CD4-positive, alpha-beta memory T cell (primary cell): ENCODE measurements at regions of chr6 and their contacts with region 1.

Region 1: DNA sequence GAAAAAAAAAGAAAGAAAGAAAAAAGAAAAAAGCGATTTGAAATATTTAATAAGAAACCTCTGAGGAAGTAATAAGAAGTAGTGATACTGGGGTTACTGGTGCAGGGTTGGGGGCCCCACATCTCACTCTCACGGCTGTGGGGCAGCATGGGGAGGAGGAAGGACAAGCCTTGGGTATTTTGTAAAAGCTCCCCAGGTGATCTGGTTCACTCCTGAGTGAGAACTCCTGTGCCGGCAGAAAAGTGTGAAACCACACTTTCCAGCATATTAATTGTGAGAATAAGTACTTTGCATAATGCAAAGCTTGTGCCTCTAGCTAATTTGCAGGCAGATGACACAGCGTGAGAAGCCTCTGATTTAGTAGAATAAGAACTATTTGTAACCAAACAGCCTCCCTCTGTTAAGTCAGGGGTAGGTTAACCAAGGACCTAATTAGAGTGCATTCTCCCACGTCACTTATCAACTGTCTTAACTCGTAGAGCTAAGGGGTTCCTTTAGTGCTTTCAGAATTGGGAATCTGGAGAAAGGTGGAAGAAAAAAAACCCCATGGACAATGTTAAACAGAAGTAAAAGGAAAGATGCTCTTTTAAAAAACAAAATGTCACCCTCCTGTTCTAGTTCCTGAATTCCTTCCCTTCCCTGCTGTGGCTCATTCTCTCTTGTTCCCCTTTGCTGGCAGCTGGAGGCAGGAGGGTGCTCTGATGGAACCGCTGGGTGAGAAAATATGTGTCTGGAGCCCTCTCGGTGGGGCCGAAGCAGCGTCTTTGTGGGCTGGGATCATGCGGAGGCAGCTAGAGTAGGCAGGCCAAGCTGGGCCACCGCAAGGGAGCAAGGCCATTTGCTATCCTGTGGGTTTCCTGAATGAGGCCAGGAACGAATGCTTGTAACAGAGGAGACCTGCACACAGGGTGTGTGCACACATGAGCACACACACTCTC is 108.7 kb downstream of the FYN start:
- DNase-seq: peak; percentile 73 to 87 (median 74)
- H3K4me3 ChIP-seq: peak overlapping the region; percentile 12 to 39
- H3K4me3 Mint-ChIP-seq: peak overlapping the region; percentile 74 to 97 (median 82)
- H3K27ac ChIP-seq: peak overlapping the region; percentile 99
- H3K27ac Mint-ChIP-seq: peak overlapping the region; percentile 97 to 100 (median 99)
- H3K4me1 ChIP-seq: peaks cover 96% of the 10 kb centered on the region
- H3K4me1 Mint-ChIP-seq: peaks cover 88 to 100% (median 94%) of the 10 kb centered on the region in 4 donors
- H3K27me3 ChIP-seq: no peaks in the 10 kb centered on the region
- H3K27me3 Mint-ChIP-seq: no peaks in the 10 kb centered on the region

Region 2: GRCh38 chr6:110682460-110682853 is 1082.0 kb before region 1 on chr6:
- CTCF ChIA-PET with region 1: no interaction called
- POLR2A ChIA-PET with region 1: no interaction called
- intact Hi-C with region 1: no loop called
- DNase-seq: peak; percentile 76 to 81 (median 78)
- H3K4me3 ChIP-seq: no peak overlapping the region
- H3K4me3 Mint-ChIP-seq: peak overlapping the region in 1 of 8 donors; percentile 0
- H3K27ac ChIP-seq: no peak overlapping the region
- H3K27ac Mint-ChIP-seq: peak overlapping the region in 4 of 7 donors; percentile 60 to 76 (median 69)
- H3K4me1 ChIP-seq: peaks cover 13% of the 10 kb centered on the region
- H3K4me1 Mint-ChIP-seq: peaks cover 11 to 24% (median 16%) of the 10 kb centered on the region in 4 donors
- H3K27me3 ChIP-seq: no peaks in the 10 kb centered on the region
- H3K27me3 Mint-ChIP-seq: no peaks in the 10 kb centered on the region

Region 3: GRCh38 chr6:111683749-111684267 is 80.7 kb before region 1 on chr6:
- CTCF ChIA-PET with region 1: no interaction called
- POLR2A ChIA-PET with region 1: no interaction called
- intact Hi-C with region 1: no loop called
- DNase-seq: peak in 4 of 5 donors; percentile 21 to 30 (median 25)
- H3K4me3 ChIP-seq: no peak overlapping the region
- H3K4me3 Mint-ChIP-seq: peak overlapping the region; percentile 13 to 79 (median 70)
- H3K27ac ChIP-seq: peak overlapping the region; percentile 45
- H3K27ac Mint-ChIP-seq: peak overlapping the region; percentile 72 to 94 (median 92)
- H3K4me1 ChIP-seq: peaks cover 80% of the 10 kb centered on the region
- H3K4me1 Mint-ChIP-seq: peaks cover 69 to 92% (median 81%) of the 10 kb centered on the region in 4 donors
- H3K27me3 ChIP-seq: no peaks in the 10 kb centered on the region
- H3K27me3 Mint-ChIP-seq: no peaks in the 10 kb centered on the region

Region 4: GRCh38 chr6:111696814-111697213 is 67.7 kb before region 1 on chr6:
- CTCF ChIA-PET with region 1: no interaction called
- POLR2A ChIA-PET with region 1: no interaction called
- intact Hi-C with region 1: no loop called
- DNase-seq: no peak
- H3K4me3 ChIP-seq: no peak overlapping the region
- H3K4me3 Mint-ChIP-seq: no peak overlapping the region
- H3K27ac ChIP-seq: no peak overlapping the region
- H3K27ac Mint-ChIP-seq: peak overlapping the region in 3 of 7 donors; percentile 48 to 64 (median 63)
- H3K4me1 ChIP-seq: peaks cover 54% of the 10 kb centered on the region
- H3K4me1 Mint-ChIP-seq: peaks cover 46 to 76% (median 63%) of the 10 kb centered on the region in 4 donors
- H3K27me3 ChIP-seq: no peaks in the 10 kb centered on the region
- H3K27me3 Mint-ChIP-seq: no peaks in the 10 kb centered on the region

Region 5: GRCh38 chr6:111709615-111710398 is 54.7 kb before region 1 on chr6:
- CTCF ChIA-PET with region 1: interaction called, 9 read pairs
- POLR2A ChIA-PET with region 1: interaction called, 22 read pairs
- intact Hi-C with region 1: loop called (anchors 2 kb)
- DNase-seq: peak; percentile 74 to 79 (median 76)
- H3K4me3 ChIP-seq: no peak overlapping the region
- H3K4me3 Mint-ChIP-seq: peak overlapping the region; percentile 26 to 82 (median 44)
- H3K27ac ChIP-seq: peak overlapping the region; percentile 42
- H3K27ac Mint-ChIP-seq: peak overlapping the region; percentile 91 to 97 (median 95)
- H3K4me1 ChIP-seq: peaks cover 51% of the 10 kb centered on the region
- H3K4me1 Mint-ChIP-seq: peaks cover 40 to 60% (median 48%) of the 10 kb centered on the region in 4 donors
- H3K27me3 ChIP-seq: no peaks in the 10 kb centered on the region
- H3K27me3 Mint-ChIP-seq: no peaks in the 10 kb centered on the region

Region 6: DNA sequence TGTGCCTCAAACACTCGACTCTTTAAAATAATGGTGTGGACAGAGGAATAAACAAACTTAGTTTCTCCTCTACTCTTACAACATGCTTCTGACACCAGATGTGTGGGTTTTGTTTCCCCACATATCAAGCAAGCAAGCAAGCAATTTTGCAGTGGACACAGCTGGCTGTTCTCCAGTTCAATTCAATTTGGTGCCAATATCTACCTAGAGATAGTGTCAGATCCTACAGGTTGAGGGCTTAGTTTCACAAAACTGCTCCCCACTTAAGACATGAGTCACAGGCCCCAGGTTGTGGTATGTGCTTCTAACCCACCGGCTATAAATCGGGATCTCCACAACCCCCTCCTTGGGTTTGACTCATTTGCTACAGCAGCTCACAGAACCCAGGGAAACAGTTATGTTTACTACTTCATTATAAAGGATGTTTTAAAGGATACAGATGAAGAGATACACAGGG is 27.4 kb before region 1 on chr6:
- CTCF ChIA-PET with region 1: no interaction called
- POLR2A ChIA-PET with region 1: interaction called, 201 read pairs
- intact Hi-C with region 1: no loop called
- DNase-seq: peak in 1 of 5 donors; percentile 78
- H3K4me3 ChIP-seq: no peak overlapping the region
- H3K4me3 Mint-ChIP-seq: peak overlapping the region in 7 of 8 donors; percentile 32 to 81 (median 69)
- H3K27ac ChIP-seq: peak overlapping the region; percentile 32
- H3K27ac Mint-ChIP-seq: peak overlapping the region; percentile 87 to 97 (median 93)
- H3K4me1 ChIP-seq: peaks cover 100% of the 10 kb centered on the region
- H3K4me1 Mint-ChIP-seq: peaks cover 74 to 100% (median 86%) of the 10 kb centered on the region in 4 donors
- H3K27me3 ChIP-seq: no peaks in the 10 kb centered on the region
- H3K27me3 Mint-ChIP-seq: no peaks in the 10 kb centered on the region

Region 7: DNA sequence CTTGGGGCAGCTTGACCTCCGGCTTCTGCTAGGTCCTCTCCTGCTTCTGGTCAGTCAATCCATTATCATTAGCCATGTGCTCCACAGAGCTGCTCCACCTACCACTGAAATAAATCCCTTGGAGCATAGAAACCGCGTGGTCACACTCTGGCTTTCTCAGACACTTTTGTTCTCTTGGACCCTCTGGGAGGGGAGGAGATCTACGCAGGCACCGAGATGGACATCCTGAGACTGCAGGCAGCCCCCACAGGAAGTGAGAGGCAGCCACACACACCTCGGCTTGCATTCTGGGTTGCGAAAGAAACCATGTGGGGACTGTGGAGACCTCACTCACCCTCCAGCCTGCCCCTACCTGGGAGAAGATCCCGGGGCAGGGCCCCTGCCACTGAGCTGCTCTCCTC is 29.2 kb after region 1 on chr6:
- CTCF ChIA-PET with region 1: interaction called, 9 read pairs
- POLR2A ChIA-PET with region 1: interaction called, 27 read pairs
- intact Hi-C with region 1: loop called (anchors 5 kb)
- DNase-seq: peak; percentile 45 to 70 (median 49)
- H3K4me3 ChIP-seq: peak overlapping the region; percentile 42 to 52
- H3K4me3 Mint-ChIP-seq: peak overlapping the region; percentile 63 to 84 (median 81)
- H3K27ac ChIP-seq: peak overlapping the region; percentile 45
- H3K27ac Mint-ChIP-seq: peak overlapping the region in 6 of 7 donors; percentile 88 to 95 (median 92)
- H3K4me1 ChIP-seq: peaks cover 94% of the 10 kb centered on the region
- H3K4me1 Mint-ChIP-seq: peaks cover 6 to 63% (median 31%) of the 10 kb centered on the region in 4 donors
- H3K27me3 ChIP-seq: no peaks in the 10 kb centered on the region
- H3K27me3 Mint-ChIP-seq: no peaks in the 10 kb centered on the region

Region 8: DNA sequence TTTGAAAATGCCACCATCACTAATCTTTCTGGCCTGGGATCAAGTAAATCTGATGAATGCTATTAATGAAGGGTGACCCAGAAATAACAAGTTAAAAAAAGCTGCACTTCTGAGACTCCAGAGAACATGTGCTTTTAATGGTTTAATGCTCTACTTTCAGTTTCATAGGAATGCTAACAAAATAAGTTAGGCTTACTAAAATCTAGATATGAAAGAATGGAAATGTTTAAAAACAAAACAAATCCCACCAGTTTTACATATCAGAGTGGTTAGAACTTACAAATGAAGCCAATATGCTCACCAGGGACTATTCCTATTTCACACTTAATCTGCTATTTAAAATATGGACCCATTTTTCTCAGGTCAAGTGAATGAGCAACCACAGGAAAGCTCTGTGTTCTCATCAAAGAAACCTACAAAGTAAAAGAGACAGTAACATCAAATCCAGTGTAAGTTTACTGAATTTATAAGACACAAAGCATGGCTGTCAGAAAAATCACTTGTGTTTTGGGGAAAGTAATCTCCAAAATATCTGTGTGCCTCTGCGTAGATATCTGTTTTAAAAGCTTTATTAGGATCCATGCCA is 68.4 kb after region 1 on chr6:
- CTCF ChIA-PET with region 1: interaction called, 4 read pairs
- POLR2A ChIA-PET with region 1: interaction called, 12 read pairs
- intact Hi-C with region 1: no loop called
- DNase-seq: no peak
- H3K4me3 ChIP-seq: no peak overlapping the region
- H3K4me3 Mint-ChIP-seq: peak overlapping the region; percentile 29 to 82 (median 69)
- H3K27ac ChIP-seq: peak overlapping the region; percentile 16
- H3K27ac Mint-ChIP-seq: peak overlapping the region in 5 of 7 donors; percentile 69 to 96 (median 88)
- H3K4me1 ChIP-seq: peaks cover 86% of the 10 kb centered on the region
- H3K4me1 Mint-ChIP-seq: peaks cover 41 to 84% (median 70%) of the 10 kb centered on the region in 4 donors
- H3K27me3 ChIP-seq: no peaks in the 10 kb centered on the region
- H3K27me3 Mint-ChIP-seq: no peaks in the 10 kb centered on the region

Region 9: DNA sequence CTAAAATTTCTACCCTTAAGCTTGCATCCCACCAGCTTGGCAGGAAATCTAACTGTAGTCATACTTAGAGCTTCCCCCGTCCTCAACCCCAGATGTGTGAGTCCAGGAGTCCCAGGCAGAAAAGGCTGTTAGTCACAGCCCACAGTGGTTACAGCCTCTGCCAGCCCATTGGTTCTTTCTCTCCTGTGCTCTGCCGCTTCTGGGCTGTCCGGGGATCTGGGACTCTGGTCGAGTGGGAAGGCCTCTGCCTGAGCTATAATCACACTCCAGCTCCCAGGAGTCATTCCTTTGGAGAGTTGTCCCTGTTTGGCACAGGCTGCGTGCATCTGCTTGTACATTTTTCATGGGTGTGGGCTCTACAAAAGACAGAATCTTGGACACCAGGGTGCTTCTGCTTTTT is 154.3 kb after region 1 on chr6:
- CTCF ChIA-PET with region 1: no interaction called
- POLR2A ChIA-PET with region 1: no interaction called
- intact Hi-C with region 1: no loop called
- DNase-seq: no peak
- H3K4me3 ChIP-seq: no peak overlapping the region
- H3K4me3 Mint-ChIP-seq: no peak overlapping the region
- H3K27ac ChIP-seq: no peak overlapping the region
- H3K27ac Mint-ChIP-seq: no peak overlapping the region
- H3K4me1 ChIP-seq: no peaks in the 10 kb centered on the region
- H3K4me1 Mint-ChIP-seq: no peaks in the 10 kb centered on the region
- H3K27me3 ChIP-seq: no peaks in the 10 kb centered on the region
- H3K27me3 Mint-ChIP-seq: no peaks in the 10 kb centered on the region

Region 10: GRCh38 chr6:111973118-111973761 is 208.7 kb after region 1 on chr6:
- CTCF ChIA-PET with region 1: interaction called, 3 read pairs
- POLR2A ChIA-PET with region 1: interaction called, 11 read pairs
- intact Hi-C with region 1: no loop called
- DNase-seq: peak; percentile 63 to 91 (median 78)
- H3K4me3 ChIP-seq: peak overlapping the region in 1 of 2 donors; percentile 6
- H3K4me3 Mint-ChIP-seq: peak overlapping the region; percentile 61 to 79 (median 66)
- H3K27ac ChIP-seq: peak overlapping the region; percentile 75
- H3K27ac Mint-ChIP-seq: peak overlapping the region; percentile 89 to 99 (median 95)
- H3K4me1 ChIP-seq: peaks cover 29% of the 10 kb centered on the region
- H3K4me1 Mint-ChIP-seq: peaks cover 30 to 60% (median 48%) of the 10 kb centered on the region in 4 donors
- H3K27me3 ChIP-seq: no peaks in the 10 kb centered on the region
- H3K27me3 Mint-ChIP-seq: no peaks in the 10 kb centered on the region